Sigmoid colon (tissue), 7 donors: ENCODE measurements at regions of chr1 and their contacts with region 1.

Region 1: GRCh38 chr1:22025368-22026155 is 24.1 kb downstream of the CELA3A start:
- DNase-seq: peak; percentile 93
- H3K4me3 ChIP-seq: peak overlapping the region; percentile 89 to 98 (median 96)
- H3K27ac ChIP-seq: peak overlapping the region; percentile 99 to 100 (median 99)
- H3K4me1 ChIP-seq: peaks cover 0 to 29% (median 12%) of the 10 kb centered on the region in 4 donors
- H3K27me3 ChIP-seq: no peaks in the 10 kb centered on the region
- CTCF ChIP-seq: no peak
- EP300 ChIP-seq: no peak
- POLR2A ChIP-seq: peak; percentile 93 to 96

Region 2: DNA sequence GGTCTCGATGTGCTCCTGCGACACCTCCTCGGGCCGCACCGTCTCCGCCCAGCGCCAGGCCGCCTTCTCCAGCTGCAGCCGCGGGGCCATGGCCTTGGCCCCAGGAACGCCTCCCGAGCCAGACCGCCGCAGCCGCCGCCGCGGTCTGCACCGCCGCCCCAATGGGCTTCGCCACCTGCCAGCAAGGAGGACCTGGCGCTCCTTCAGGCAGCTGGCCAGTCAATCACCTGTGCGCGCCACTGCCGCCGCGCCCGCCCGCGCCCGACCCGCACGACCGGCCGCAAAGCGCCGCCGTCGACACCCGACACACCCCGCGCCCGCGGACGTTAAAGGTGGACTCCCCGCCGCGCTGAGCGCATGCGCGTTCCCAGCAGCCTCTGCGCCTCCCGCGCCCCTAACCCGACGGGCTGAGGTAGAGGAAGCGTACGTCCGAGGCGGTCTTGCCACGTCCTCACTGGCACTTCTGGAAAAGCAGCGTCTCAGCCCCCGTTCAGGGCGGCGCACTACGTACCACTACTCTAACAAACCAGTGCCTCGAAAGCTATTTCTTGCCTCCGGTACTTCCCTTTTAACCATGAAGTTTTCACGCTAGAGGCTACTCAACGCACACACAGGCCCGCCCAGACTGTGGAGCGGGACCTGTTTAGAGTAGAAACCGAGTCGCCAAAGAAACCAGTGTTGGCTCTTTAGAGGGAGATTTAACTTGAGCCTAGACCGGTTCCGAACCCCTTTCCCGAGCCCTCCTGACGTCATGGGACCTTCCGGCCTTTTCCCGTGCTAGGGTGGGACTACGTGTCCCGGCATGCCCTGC is 242.5 kb before region 1 on chr1 and contains the start of gene USP48:
- intact Hi-C with region 1: loop called (anchors 5 kb)
- DNase-seq: peak; percentile 98
- H3K4me3 ChIP-seq: peak within 1 kb of the TSS; percentile 84 to 97 (median 94)
- H3K27ac ChIP-seq: peak within 1 kb of the TSS; percentile 96 to 100 (median 99)
- H3K4me1 ChIP-seq: peaks cover 0 to 31% (median 24%) of the 10 kb centered on the region in 4 donors
- H3K27me3 ChIP-seq: no peaks in the 10 kb centered on the region
- CTCF ChIP-seq: no peak
- EP300 ChIP-seq: no peak
- POLR2A ChIP-seq: peak; percentile 93 to 94
- total RNA-seq, gene USP48: 47.1 to 77.0 (median 50.5) TPM

Region 3: DNA sequence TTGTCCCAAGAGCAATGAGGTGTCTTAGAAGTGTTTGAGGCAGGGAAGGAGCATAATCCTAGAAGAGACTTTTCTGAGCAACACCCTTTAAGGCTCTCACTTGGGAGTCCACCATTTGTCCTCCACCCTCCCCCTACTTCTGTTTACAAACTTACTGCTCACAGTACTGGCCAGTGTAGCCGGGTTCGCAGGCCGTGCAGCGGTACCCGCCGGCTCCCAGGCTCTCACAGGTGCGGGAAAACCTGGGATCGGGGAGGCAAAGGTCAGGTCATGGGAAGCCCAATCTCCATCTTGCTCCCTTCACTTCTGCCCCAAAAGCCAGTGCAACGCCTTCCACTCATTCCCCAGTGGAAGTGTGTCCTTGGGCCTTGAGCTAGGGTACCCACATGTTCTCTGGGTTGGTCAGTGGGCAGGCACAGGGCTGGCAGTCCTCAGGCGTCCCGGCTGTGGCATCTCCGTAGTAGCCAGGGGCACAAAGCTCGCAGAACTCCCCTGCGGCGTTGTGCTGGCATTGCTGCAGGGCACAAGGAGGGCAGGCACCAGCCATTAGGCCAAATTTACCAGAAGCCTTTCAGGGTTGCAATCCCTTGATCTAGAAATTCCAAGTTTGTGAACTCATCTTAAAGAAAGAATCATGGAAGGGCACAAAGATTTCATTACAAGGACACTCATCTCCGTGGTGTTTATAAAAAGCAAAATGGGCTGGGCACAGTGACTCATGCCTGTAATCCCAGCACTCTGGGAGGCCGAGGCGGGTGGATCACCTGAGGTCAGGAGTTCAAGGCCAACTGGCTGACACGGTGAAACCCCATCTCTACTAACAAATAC is 163.7 kb before region 1 on chr1:
- intact Hi-C with region 1: no loop called
- DNase-seq: no peak
- H3K4me3 ChIP-seq: no peak overlapping the region
- H3K27ac ChIP-seq: peak overlapping the region; percentile 70 to 88 (median 79)
- H3K4me1 ChIP-seq: peaks cover 0 to 23% (median 6%) of the 10 kb centered on the region in 4 donors
- H3K27me3 ChIP-seq: no peaks in the 10 kb centered on the region
- CTCF ChIP-seq: no peak
- EP300 ChIP-seq: no peak
- POLR2A ChIP-seq: no peak

Region 4: DNA sequence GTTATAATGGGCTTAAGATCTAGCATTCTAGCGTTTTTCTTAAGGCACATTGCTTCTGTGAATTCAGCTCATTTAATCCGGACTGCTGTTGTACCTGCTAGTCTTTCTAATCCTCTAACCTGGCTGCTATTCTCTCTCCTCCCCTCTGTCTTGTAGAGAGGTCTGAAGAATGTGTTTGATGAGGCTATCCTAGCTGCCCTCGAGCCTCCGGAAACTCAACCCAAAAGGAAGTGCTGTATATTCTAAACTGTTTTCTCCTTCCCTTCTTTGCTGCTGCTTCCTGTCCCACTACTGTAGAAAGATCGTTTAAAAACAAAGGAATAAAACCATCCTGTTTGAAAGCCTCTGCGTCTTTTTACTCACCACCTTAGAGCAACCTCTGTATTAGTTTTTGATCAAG is 64.2 kb after region 1 on chr1:
- intact Hi-C with region 1: no loop called
- DNase-seq: no peak
- H3K4me3 ChIP-seq: no peak overlapping the region
- H3K27ac ChIP-seq: peak overlapping the region in 1 of 4 donors; percentile 1
- H3K4me1 ChIP-seq: peaks cover 0 to 51% (median 39%) of the 10 kb centered on the region in 4 donors
- H3K27me3 ChIP-seq: no peaks in the 10 kb centered on the region
- CTCF ChIP-seq: no peak
- EP300 ChIP-seq: no peak
- POLR2A ChIP-seq: no peak